ENCODE measurements at regions of chr4 and their contacts with region 1.

Region 1: DNA sequence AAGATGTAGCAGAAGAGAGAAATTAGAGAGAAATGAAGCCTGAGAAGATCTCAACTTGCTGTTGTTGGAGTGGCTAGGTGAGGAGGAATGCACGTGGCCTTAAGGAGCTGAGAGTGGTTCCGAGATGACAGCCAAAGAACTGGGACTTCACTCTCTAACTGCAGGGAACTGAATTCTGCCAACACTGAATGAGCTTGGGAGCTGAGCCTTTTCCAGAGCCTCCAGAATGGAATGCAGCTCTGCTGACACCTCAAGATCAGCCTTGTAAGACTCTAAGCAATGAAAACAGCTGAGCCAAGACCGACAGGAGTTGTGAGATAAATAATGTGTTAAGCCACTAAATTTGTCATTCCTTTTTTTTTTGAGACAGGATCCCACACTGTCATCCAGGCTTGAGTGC is 73.0 kb downstream of the TLL1 start:
- DNase-seq: no peak
- CTCF ChIP-seq: no peak

Region 2: DNA sequence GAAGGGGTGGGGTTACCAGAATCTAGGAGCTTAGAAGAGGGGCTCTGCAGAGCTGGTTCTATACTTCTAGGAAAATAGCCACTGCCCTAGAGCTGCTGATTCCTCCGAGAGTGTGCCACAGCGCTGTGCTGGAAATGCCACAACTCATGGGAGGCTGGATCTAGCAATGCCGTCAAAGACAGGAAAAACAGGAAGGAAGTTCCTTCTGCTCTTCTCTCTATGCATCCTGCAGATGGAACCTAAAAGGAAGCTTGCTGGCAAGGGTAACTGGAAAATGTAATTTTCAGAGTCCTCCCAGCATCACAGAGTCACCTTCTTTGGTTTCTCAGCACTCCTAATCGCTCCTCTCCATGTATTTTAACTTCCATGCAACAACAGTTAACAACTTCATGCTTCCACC is 194.1 kb before region 1 on chr4:
- CTCF ChIA-PET with region 1: no interaction called
- POLR2A ChIA-PET with region 1: no interaction called
- DNase-seq: no peak
- CTCF ChIP-seq: no peak

Region 3: GRCh38 chr4:165931741-165932140 is 14.2 kb before region 1 on chr4:
- CTCF ChIA-PET with region 1: interaction called, 11 read pairs
- POLR2A ChIA-PET with region 1: no interaction called
- DNase-seq: no peak
- CTCF ChIP-seq: no peak

Region 4: DNA sequence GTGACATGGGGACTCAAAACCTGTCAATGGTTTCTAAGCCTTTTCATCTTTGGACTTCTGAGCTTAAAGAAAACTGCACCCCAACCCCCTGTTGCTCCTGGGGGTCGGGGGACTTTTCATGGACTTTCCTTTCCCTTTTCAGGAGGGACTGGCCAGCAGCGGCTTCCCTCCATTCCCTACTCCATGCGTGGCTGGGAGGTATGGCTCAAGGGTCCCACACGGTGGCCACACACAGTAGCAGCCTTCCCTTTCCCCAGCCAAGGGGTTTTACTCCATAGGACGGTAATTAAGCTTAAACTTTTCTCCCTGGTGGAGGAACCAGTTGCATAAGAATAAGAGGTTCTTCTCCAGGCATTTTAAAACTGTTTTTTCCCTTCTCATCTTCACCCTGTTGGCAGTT is 252.5 kb after region 1 on chr4:
- CTCF ChIA-PET with region 1: no interaction called
- POLR2A ChIA-PET with region 1: no interaction called
- DNase-seq: no peak
- CTCF ChIP-seq: no peak

Measured in GM10248 (cell line).